Activated CD8-positive, alpha-beta memory T cell treated with anti-CD3 and anti-CD28 coated beads, Interleukin-2, amount 10 ng/mL, durations not matched to agents 7 days and 5 days (primary cell): ENCODE measurements at regions of chr10 and their contacts with region 1.

Region 1: GRCh38 chr10:98170249-98171117 is 36.0 kb downstream of the R3HCC1L start:
- DNase-seq: peak; percentile 46
- ATAC-seq: no peak
- H3K4me3 Mint-ChIP-seq: no peak overlapping the region
- H3K27ac Mint-ChIP-seq: no peak overlapping the region
- H3K4me1 Mint-ChIP-seq: no peaks in the 10 kb centered on the region
- H3K27me3 Mint-ChIP-seq: no peaks in the 10 kb centered on the region

Region 2: GRCh38 chr10:98309366-98310355 is 139.2 kb after region 1 on chr10:
- CTCF ChIA-PET with region 1: interaction called, 32 read pairs
- DNase-seq: no peak
- ATAC-seq: peak; percentile 45
- H3K4me3 Mint-ChIP-seq: no peak overlapping the region
- H3K27ac Mint-ChIP-seq: no peak overlapping the region
- H3K4me1 Mint-ChIP-seq: no peaks in the 10 kb centered on the region
- H3K27me3 Mint-ChIP-seq: peaks cover 41% of the 10 kb centered on the region

Region 3: GRCh38 chr10:98577578-98577977 is 407.1 kb after region 1 on chr10:
- CTCF ChIA-PET with region 1: no interaction called
- DNase-seq: no peak
- ATAC-seq: no peak
- H3K4me3 Mint-ChIP-seq: no peak overlapping the region
- H3K27ac Mint-ChIP-seq: no peak overlapping the region
- H3K4me1 Mint-ChIP-seq: no peaks in the 10 kb centered on the region
- H3K27me3 Mint-ChIP-seq: peaks cover 23% of the 10 kb centered on the region